ENCODE measurements at regions of chr17 and their contacts with region 1.

Region 1: GRCh38 chr17:42843358-42843934 is 934 bp upstream of the AOC2 start:
- DNase-seq: no peak
- CTCF ChIP-seq: peak; percentile 64

Region 2: GRCh38 chr17:42832974-42833766 is 10.3 kb before region 1 on chr17 and contains the start of gene PSME3:
- CTCF ChIA-PET with region 1: interaction called, 26 read pairs
- POLR2A ChIA-PET with region 1: interaction called, 3 read pairs
- DNase-seq: peak; percentile 94
- CTCF ChIP-seq: no peak